ENCODE measurements at regions of chr4 and their contacts with region 1.

Region 1: GRCh38 chr4:55554453-55555030 is 7.8 kb upstream of the CLOCK start:
- DNase-seq: peak in 2 of 9 experiments; percentile 54 to 67
- ATAC-seq: peak; percentile 60
- H3K4me3 ChIP-seq: no peak overlapping the region
- H3K4me3 Mint-ChIP-seq: no peak overlapping the region
- H3K27ac ChIP-seq: no peak overlapping the region
- H3K27ac Mint-ChIP-seq: no peak overlapping the region
- H3K4me1 ChIP-seq: no peaks in the 10 kb centered on the region
- H3K4me1 Mint-ChIP-seq: peaks cover 7% of the 10 kb centered on the region
- H3K27me3 ChIP-seq: no peaks in the 10 kb centered on the region
- H3K27me3 Mint-ChIP-seq: peaks cover 24% of the 10 kb centered on the region
- CTCF ChIP-seq: peak; percentile 67

Region 2: DNA sequence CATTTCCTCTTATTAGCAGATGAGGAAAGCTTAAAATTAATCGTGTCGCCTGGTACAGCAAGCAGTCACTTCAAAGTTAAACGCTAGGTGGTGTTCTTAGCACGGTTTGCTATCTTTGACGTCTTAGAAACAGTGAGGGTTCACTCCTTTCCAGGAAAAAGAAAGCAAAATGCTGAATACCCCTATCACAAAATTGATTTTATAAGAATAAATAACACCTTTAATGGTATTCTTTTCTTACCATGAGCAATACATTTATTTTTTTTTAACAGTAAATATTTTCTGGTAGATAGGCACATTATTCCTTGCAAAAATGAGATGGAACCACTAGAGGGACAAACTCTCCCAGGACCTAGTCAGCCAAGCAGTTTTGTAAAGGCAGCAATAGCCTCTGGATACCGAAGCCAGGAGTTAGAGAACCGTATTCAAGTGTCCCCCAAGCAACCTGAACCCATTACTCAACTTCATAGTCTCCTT is 583.0 kb before region 1 on chr4:
- CTCF ChIA-PET with region 1: no interaction called
- POLR2A ChIA-PET with region 1: no interaction called
- intact Hi-C with region 1: loop called (anchors 2 kb)
- DNase-seq: peak in 2 of 9 experiments; percentile 21 to 44
- ATAC-seq: peak; percentile 51
- H3K4me3 ChIP-seq: no peak overlapping the region
- H3K4me3 Mint-ChIP-seq: no peak overlapping the region
- H3K27ac ChIP-seq: no peak overlapping the region
- H3K27ac Mint-ChIP-seq: no peak overlapping the region
- H3K4me1 ChIP-seq: no peaks in the 10 kb centered on the region
- H3K4me1 Mint-ChIP-seq: no peaks in the 10 kb centered on the region
- H3K27me3 ChIP-seq: no peaks in the 10 kb centered on the region
- H3K27me3 Mint-ChIP-seq: peaks cover 12% of the 10 kb centered on the region
- CTCF ChIP-seq: peak; percentile 63

Region 3: DNA sequence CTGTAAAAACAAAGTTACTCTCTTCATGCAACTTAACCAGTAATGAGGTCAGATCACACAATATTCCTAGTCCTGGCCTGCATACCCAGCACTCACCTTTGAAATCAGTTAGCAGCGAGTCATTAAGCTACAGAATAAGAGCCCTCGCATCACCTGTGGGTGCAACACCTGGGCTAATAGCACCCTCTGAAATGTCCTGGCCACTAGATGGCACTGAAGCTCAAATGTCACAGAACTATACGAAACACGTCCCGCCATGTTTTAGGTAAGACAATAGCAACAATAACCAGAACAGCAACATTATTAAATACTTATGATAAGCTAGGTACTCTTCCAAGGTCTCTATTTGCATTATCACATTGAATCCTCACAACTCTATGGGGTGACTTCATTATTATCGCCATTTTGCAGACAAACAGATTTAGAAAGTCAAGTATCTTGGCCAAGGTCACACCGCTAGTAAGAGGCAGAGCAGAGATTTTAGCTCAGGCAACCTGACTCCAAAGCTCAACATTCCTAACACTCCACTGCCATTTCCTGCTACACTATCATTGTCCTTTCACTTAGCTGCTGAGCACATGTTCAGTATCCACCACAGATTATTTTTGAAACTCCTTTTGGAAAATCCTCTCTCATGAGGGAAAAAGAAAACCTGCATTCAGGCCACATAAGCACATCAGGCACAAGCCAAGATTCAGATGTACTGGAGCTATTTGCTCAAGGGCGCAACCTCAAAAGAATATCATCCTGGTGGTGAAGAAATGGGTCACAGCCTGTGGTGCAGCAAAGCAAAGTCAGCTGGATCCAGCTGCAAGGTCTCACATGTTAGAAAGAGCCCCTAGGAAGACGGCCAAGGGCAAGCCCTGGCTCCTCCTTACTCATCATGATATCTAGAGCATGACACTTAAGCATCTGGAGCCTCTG is 369.7 kb before region 1 on chr4:
- CTCF ChIA-PET with region 1: interaction called, 6 read pairs
- POLR2A ChIA-PET with region 1: no interaction called
- intact Hi-C with region 1: loop called in 1 of 2 experiments (anchors 5 kb)
- DNase-seq: peak in 5 of 9 experiments; percentile 7 to 52 (median 39)
- ATAC-seq: no peak
- H3K4me3 ChIP-seq: no peak overlapping the region
- H3K4me3 Mint-ChIP-seq: no peak overlapping the region
- H3K27ac ChIP-seq: no peak overlapping the region
- H3K27ac Mint-ChIP-seq: no peak overlapping the region
- H3K4me1 ChIP-seq: no peaks in the 10 kb centered on the region
- H3K4me1 Mint-ChIP-seq: no peaks in the 10 kb centered on the region
- H3K27me3 ChIP-seq: no peaks in the 10 kb centered on the region
- H3K27me3 Mint-ChIP-seq: peaks cover 9% of the 10 kb centered on the region
- CTCF ChIP-seq: peak; percentile 30

Region 4: GRCh38 chr4:55312489-55313101 is 241.9 kb before region 1 on chr4:
- CTCF ChIA-PET with region 1: interaction called, 3 read pairs
- POLR2A ChIA-PET with region 1: interaction called, 3 read pairs
- intact Hi-C with region 1: loop called (anchors 1 kb)
- DNase-seq: peak in 6 of 9 experiments; percentile 5 to 64 (median 33)
- ATAC-seq: peak; percentile 54
- H3K4me3 ChIP-seq: no peak overlapping the region
- H3K4me3 Mint-ChIP-seq: no peak overlapping the region
- H3K27ac ChIP-seq: no peak overlapping the region
- H3K27ac Mint-ChIP-seq: no peak overlapping the region
- H3K4me1 ChIP-seq: no peaks in the 10 kb centered on the region
- H3K4me1 Mint-ChIP-seq: no peaks in the 10 kb centered on the region
- H3K27me3 ChIP-seq: no peaks in the 10 kb centered on the region
- H3K27me3 Mint-ChIP-seq: peaks cover 3% of the 10 kb centered on the region
- CTCF ChIP-seq: peak; percentile 63

Region 5: DNA sequence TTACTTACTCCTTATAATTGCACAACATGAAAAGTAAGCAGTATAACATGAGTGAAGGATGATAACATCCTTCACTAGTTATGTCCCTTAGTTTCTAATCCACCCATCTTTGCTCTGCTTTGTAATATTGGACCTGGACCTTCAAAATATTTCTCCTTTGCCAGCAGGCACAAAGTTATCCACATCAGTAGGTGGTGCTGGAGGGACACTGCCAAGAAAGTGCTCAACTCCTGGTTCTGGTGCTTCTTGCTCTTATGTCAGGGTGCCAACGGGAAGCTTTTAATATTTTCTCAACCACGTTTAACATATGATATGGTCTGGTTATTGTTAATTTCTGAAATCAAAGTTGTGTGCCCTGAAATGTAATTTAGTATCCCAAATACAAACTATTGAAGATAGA is 109.7 kb before region 1 on chr4:
- CTCF ChIA-PET with region 1: interaction called, 18 read pairs
- POLR2A ChIA-PET with region 1: no interaction called
- intact Hi-C with region 1: loop called (anchors 1 to 2 kb)
- DNase-seq: peak in 1 of 9 experiments; percentile 15
- ATAC-seq: no peak
- H3K4me3 ChIP-seq: no peak overlapping the region
- H3K4me3 Mint-ChIP-seq: no peak overlapping the region
- H3K27ac ChIP-seq: no peak overlapping the region
- H3K27ac Mint-ChIP-seq: peak overlapping the region; percentile 39
- H3K4me1 ChIP-seq: no peaks in the 10 kb centered on the region
- H3K4me1 Mint-ChIP-seq: peaks cover 14% of the 10 kb centered on the region
- H3K27me3 ChIP-seq: no peaks in the 10 kb centered on the region
- H3K27me3 Mint-ChIP-seq: no peaks in the 10 kb centered on the region
- CTCF ChIP-seq: peak; percentile 20

Region 6: DNA sequence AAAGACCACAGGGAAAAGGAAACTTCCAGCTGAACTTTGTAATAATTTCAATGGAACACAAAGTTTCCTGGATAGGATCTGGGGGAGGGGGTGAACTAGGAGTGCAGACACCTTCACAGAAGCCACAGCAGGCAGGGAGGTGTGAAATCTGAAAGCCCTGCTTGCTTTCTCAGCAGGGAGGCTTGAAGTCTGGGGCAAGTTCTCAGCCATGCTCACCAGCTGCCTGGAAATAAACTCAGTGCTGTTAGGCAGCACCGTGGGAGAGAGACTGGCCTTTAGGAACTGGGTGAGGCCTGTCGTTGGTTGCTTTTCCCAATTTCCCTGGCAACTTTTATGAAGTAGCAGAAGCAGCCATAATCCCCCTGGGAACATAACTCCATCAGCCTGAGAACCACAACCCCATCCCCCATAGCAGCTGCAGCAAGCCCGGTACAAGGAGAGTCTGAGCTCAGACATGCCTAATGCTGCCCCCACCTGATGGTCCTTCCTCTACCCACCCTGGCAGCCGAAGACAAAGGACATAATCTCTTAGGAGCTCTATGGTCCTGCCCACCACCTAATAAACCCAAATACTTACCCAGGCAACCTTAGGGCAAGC is 120.8 kb after region 1 on chr4:
- CTCF ChIA-PET with region 1: no interaction called
- POLR2A ChIA-PET with region 1: no interaction called
- intact Hi-C with region 1: no loop called
- DNase-seq: no peak
- ATAC-seq: no peak
- H3K4me3 ChIP-seq: no peak overlapping the region
- H3K4me3 Mint-ChIP-seq: no peak overlapping the region
- H3K27ac ChIP-seq: no peak overlapping the region
- H3K27ac Mint-ChIP-seq: no peak overlapping the region
- H3K4me1 ChIP-seq: no peaks in the 10 kb centered on the region
- H3K4me1 Mint-ChIP-seq: no peaks in the 10 kb centered on the region
- H3K27me3 ChIP-seq: no peaks in the 10 kb centered on the region
- H3K27me3 Mint-ChIP-seq: peaks cover 10% of the 10 kb centered on the region
- CTCF ChIP-seq: no peak

Region 7: DNA sequence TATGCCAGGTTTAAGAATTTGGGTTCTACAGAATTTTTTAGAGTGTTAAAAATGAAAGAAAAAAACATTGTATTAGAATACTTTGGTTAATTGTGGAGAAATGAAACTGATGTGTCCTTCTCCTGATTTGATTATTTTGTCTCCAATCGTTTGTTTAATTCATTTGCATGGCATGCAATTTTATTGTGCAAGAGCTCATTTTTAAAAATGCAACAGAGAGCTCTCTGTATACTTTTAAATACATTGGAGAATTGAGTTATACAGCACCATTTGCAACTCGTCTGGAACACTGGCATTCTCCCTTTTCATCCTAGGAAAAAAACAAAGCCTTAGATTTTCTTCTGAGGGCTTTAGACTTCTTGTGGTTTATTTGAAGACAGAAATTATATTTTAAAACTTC is 265.7 kb after region 1 on chr4:
- CTCF ChIA-PET with region 1: no interaction called
- POLR2A ChIA-PET with region 1: no interaction called
- intact Hi-C with region 1: no loop called
- DNase-seq: no peak
- ATAC-seq: no peak
- H3K4me3 ChIP-seq: no peak overlapping the region
- H3K4me3 Mint-ChIP-seq: no peak overlapping the region
- H3K27ac ChIP-seq: no peak overlapping the region
- H3K27ac Mint-ChIP-seq: no peak overlapping the region
- H3K4me1 ChIP-seq: no peaks in the 10 kb centered on the region
- H3K4me1 Mint-ChIP-seq: peaks cover 6% of the 10 kb centered on the region
- H3K27me3 ChIP-seq: peaks cover 0 to 3% of the 10 kb centered on the region in 2 experiments
- H3K27me3 Mint-ChIP-seq: peaks cover 21% of the 10 kb centered on the region
- CTCF ChIP-seq: no peak

Region 8: GRCh38 chr4:55859711-55860110 is 305.2 kb after region 1 on chr4:
- CTCF ChIA-PET with region 1: no interaction called
- POLR2A ChIA-PET with region 1: no interaction called
- intact Hi-C with region 1: no loop called
- DNase-seq: no peak
- ATAC-seq: no peak
- H3K4me3 ChIP-seq: no peak overlapping the region
- H3K4me3 Mint-ChIP-seq: no peak overlapping the region
- H3K27ac ChIP-seq: no peak overlapping the region
- H3K27ac Mint-ChIP-seq: no peak overlapping the region
- H3K4me1 ChIP-seq: peaks cover 10% of the 10 kb centered on the region
- H3K4me1 Mint-ChIP-seq: peaks cover 18% of the 10 kb centered on the region
- H3K27me3 ChIP-seq: no peaks in the 10 kb centered on the region
- H3K27me3 Mint-ChIP-seq: no peaks in the 10 kb centered on the region
- CTCF ChIP-seq: no peak

Measured in CD8-positive, alpha-beta T cell (primary cell).